Heart right ventricle (tissue), 16 donors: ENCODE measurements at regions of chr12 and their contacts with region 1.

Region 1: DNA sequence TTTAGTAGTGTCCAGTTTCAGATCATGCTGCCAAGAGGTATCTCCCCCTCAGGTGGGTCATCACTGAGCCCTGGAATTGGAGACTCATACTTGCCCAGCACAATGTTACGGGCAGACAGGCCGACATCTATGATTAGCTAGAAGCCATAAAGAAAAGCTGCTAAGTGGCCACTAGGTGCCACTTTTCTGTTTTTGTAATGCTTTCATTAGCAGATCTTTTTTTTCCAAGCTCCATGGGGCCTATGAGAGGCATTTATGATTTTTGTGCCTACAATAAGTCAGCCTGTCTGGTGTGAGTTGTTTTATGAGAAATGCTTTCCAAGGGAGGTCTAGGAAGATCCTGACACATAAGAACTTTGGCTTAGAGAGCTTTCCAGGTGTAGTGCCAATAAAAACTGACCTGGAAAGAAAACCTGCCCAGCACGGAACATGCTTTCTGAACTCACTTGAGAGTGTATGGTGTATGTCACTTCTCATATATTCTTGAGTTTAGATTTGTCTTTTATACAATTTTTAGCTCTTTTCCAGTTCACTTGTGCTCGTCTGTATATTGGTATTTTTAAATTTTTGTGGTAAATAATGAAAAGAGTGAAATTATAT is 21.8 kb upstream of the SMCO2 start:
- DNase-seq: peak in 1 of 2 donors; percentile 41
- ATAC-seq: peak; percentile 70 to 91 (median 84)
- H3K4me3 ChIP-seq: no peak overlapping the region
- H3K27ac ChIP-seq: peak overlapping the region in 5 of 10 donors; percentile 3 to 49 (median 20)
- H3K4me1 ChIP-seq: peaks cover 0 to 20% (median 4%) of the 10 kb centered on the region in 9 donors
- H3K27me3 ChIP-seq: no peaks in the 10 kb centered on the region
- CTCF ChIP-seq: peak; percentile 29 to 75 (median 61)

Region 2: GRCh38 chr12:27652174-27652763 is 227.5 kb after region 1 on chr12:
- intact Hi-C with region 1: loop called in 4 of 10 experiments (anchors 2 to 5 kb)
- DNase-seq: peak in 1 of 2 donors; percentile 85
- ATAC-seq: peak in 7 of 8 donors; percentile 75 to 87 (median 82)
- H3K4me3 ChIP-seq: no peak overlapping the region
- H3K27ac ChIP-seq: no peak overlapping the region
- H3K4me1 ChIP-seq: peaks cover 0 to 15% (median 0%) of the 10 kb centered on the region in 9 donors
- H3K27me3 ChIP-seq: no peaks in the 10 kb centered on the region
- CTCF ChIP-seq: peak; percentile 74 to 95 (median 89)